Activated CD4-positive, alpha-beta T cell treated with anti-CD3 and anti-CD28 coated beads, Interleukin-2, amount 10 ng/mL, durations not matched to agents 24 days and 14 days (primary cell): ENCODE measurements at regions of chr18 and their contacts with region 1.

Region 1: DNA sequence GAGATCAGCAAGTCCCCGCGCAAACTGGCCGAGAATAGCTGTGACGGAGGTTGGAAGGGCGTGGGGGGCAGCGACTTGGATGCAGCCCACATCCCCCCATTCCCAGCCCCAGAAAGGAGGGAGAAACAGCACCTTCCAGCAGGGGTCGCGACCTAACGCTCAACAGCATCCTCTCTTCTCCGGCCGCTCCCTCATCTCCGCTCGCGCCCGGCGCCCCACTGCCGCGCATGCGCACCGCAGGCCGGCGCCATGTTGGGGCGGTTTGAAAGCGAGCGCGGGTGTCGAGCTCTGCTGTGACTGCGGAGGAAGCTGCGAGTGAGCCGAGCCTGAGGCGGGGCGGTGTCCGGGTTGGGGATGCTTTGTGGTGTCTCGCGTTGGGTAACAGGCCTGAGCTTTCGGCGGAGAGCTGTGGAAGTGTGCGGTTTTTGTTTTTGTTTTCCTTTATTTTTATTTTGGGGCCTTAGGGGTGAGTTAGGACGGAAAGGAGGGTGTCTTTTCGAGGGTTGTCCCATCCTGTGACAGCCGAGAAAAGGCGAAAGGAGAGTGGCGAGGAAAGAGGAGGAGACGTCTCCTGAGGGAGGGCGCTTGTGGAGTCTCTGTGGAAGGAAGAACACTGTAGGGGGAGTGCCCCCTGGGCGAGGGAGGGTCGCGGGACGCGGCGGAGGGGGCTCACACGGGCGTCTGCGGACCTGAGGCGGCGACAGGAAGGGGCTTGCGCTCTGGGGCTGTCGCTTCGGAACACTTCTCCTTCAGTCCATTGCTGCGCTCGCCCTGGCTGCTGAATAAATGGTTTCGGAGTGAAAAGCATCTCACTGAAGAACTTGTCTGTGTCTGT is at the starts of genes C18orf54 and STARD6:
- DNase-seq: peak; percentile 98
- H3K4me3 Mint-ChIP-seq: peak within 1 kb of the TSS; percentile 99
- H3K27ac Mint-ChIP-seq: peak within 1 kb of the TSS; percentile 100
- H3K4me1 Mint-ChIP-seq: peaks cover 25% of the 10 kb centered on the region
- H3K27me3 Mint-ChIP-seq: no peaks in the 10 kb centered on the region
- total RNA-seq, gene C18orf54: 10.9 and 12.8 TPM in 2 replicates
- total RNA-seq, gene STARD6: not detected in 2 replicates

Region 2: GRCh38 chr18:53745224-53745967 is 612.5 kb before region 1 on chr18:
- intact Hi-C with region 1: no loop called
- DNase-seq: no peak
- H3K4me3 Mint-ChIP-seq: no peak overlapping the region
- H3K27ac Mint-ChIP-seq: no peak overlapping the region
- H3K4me1 Mint-ChIP-seq: no peaks in the 10 kb centered on the region
- H3K27me3 Mint-ChIP-seq: no peaks in the 10 kb centered on the region

Region 3: DNA sequence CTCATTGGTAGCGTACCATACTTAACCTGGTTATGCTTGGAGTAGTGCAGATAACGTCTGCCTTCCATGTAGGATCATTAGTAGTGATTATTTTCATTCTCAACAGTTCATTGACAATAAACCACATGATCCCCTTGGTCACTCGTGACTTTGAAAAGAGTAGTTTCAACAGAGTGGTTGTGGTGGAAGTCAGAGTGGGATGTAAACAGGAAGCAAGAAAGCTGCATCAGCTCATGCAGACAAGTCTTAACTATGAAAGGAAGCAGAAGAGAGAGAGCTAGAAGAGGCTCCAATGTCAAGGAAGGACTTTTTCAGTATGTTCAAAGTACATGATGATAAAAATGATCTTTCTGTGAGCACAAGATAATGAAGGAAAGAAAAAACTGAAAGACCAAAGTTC is 420.8 kb before region 1 on chr18:
- intact Hi-C with region 1: loop called (anchors 10 kb)
- DNase-seq: peak; percentile 59
- H3K4me3 Mint-ChIP-seq: peak overlapping the region; percentile 5
- H3K27ac Mint-ChIP-seq: no peak overlapping the region
- H3K4me1 Mint-ChIP-seq: peaks cover 11% of the 10 kb centered on the region
- H3K27me3 Mint-ChIP-seq: no peaks in the 10 kb centered on the region

Region 4: GRCh38 chr18:54192908-54193307 is 165.0 kb before region 1 on chr18:
- intact Hi-C with region 1: no loop called
- DNase-seq: no peak
- H3K4me3 Mint-ChIP-seq: no peak overlapping the region
- H3K27ac Mint-ChIP-seq: no peak overlapping the region
- H3K4me1 Mint-ChIP-seq: peaks cover 14% of the 10 kb centered on the region
- H3K27me3 Mint-ChIP-seq: no peaks in the 10 kb centered on the region

Region 5: DNA sequence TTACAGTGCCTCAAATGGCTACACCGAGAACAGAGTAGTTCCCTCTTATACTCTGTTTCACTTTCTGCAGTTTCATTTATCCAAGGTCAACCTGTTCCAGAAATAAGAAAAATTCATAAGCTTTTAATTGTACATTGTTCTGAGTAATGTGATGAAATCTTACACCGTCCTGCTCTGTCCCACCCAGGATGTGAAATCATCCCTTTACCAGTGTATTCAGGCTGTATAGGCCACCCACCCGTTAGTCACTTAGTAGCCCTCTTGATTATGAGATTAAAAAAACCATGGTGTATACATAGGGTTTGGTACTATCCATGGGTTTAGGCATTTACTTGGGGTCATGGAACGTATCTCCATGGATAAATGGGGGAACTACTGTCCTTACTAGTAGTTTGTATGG is 30.1 kb before region 1 on chr18:
- intact Hi-C with region 1: no loop called
- DNase-seq: no peak
- H3K4me3 Mint-ChIP-seq: no peak overlapping the region
- H3K27ac Mint-ChIP-seq: no peak overlapping the region
- H3K4me1 Mint-ChIP-seq: no peaks in the 10 kb centered on the region
- H3K27me3 Mint-ChIP-seq: peaks cover 13% of the 10 kb centered on the region

Region 6: DNA sequence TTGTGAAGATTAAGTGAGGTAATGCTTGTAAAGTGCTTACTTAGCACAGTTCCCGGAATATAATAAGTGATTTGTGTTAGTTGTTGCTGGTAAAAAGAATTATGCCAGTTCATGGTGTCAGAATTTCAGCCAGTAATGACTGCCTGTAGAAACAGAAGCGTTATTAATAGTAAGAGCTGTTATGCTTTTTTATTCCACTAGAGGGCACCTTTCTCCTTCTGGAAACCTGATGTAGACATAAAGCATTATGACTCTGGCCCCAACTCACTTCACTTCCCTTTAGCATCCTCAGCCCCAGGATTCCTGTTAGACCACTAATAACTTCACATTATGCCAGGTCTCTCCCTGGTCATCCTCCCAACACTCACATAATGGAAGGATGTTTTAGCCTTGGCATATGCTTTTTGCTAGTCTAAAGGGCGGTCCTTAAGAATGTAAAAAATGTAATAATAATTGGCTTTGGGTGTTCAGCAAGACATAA is 34.7 kb after region 1 on chr18:
- intact Hi-C with region 1: loop called (anchors 2 kb)
- DNase-seq: peak; percentile 70
- H3K4me3 Mint-ChIP-seq: no peak overlapping the region
- H3K27ac Mint-ChIP-seq: no peak overlapping the region
- H3K4me1 Mint-ChIP-seq: peaks cover 27% of the 10 kb centered on the region
- H3K27me3 Mint-ChIP-seq: peaks cover 18% of the 10 kb centered on the region